ENCODE measurements at regions of chr13 and their contacts with region 1.

Region 1: GRCh38 chr13:106083620-106084350 is 451.7 kb downstream of the EFNB2 start:
- DNase-seq: no peak
- ATAC-seq: peak; percentile 75 to 92
- H3K4me3 ChIP-seq: no peak overlapping the region
- H3K27ac ChIP-seq: no peak overlapping the region
- H3K4me1 ChIP-seq: peaks cover 7% of the 10 kb centered on the region
- H3K27me3 ChIP-seq: no peaks in the 10 kb centered on the region
- CTCF ChIP-seq: peak; percentile 65

Region 2: DNA sequence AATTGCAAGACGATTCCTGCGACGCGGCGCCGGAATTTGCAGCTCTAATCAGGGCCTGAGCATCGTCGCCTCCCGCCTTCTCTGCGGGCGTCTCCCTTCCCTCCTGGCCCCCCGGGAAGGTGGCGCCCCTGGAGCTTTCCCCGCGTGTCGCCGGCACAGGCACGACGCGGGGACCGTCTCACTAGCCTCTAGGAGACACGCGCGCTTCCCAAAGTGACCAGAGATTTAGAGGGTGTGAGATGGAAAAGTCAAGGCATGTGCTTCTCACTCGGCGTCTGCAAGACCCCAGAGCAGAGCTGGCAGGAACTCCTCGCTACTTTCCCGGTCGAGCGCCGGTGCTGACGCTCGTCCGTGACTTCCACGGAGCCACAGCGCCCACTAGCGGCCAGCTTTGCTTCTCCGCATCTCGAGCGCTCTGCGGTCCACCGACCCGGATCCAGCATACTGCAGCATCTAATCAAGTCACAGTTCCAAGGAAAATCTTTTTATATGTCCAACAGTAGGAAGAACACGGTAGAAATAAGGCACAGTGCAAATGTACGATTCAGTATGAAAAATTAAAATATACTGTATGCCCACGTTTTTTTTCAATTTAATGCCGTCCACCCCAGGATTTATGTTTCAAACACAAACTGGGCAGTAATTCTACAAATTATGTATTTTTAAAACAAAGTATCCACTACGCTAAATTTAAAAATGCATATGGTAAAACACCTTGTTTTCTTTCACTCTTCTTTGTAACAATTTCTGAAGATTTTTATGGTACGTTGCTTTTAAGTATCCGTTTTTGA is 452.7 kb after region 1 on chr13:
- intact Hi-C with region 1: loop called (anchors 10 kb)
- DNase-seq: peak; percentile 93
- ATAC-seq: peak; percentile 74 to 82
- H3K4me3 ChIP-seq: peak overlapping the region; percentile 88
- H3K27ac ChIP-seq: peak overlapping the region; percentile 74
- H3K4me1 ChIP-seq: peaks cover 35% of the 10 kb centered on the region
- H3K27me3 ChIP-seq: peaks cover 6% of the 10 kb centered on the region
- CTCF ChIP-seq: peak; percentile 97

Measured in lower lobe of right lung (tissue), 2 donors.